Aorta (tissue), 5 donors: ENCODE measurements at regions of chr6 and their contacts with region 1.

Region 1: DNA sequence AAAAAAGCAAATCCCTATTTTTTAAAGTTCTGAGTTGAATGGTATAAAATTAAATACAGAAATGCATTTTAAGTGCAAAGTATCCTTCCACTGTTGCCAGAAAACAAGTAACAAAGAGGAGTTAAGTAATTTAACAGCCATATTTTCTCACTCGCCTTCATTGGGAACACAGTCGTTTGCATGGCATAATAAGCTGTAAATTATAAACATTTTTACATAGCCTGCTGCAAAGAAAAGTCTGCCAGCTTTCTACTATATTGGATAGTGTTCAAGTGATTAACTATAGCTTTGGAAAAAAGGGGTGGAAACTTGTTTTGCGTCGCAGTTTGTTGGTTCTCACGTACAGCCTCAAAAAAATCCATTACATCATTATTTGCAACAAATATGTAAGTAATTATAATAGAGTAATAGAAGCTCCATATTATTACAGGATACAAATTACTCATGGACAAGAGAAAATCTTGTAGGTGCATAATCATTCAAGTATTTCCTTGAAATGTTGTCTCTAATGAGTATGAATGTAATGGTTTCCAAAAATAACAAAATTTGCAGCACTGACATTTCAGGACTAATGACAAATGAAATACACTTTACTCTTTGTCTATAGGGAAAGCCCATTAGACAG is 139.3 kb downstream of the PDSS2 start:
- DNase-seq: no peak
- ATAC-seq: no peak
- H3K4me3 ChIP-seq: no peak overlapping the region
- H3K27ac ChIP-seq: no peak overlapping the region
- H3K4me1 ChIP-seq: no peaks in the 10 kb centered on the region
- H3K27me3 ChIP-seq: no peaks in the 10 kb centered on the region

Region 2: GRCh38 chr6:107704347-107705013 is 384.5 kb after region 1 on chr6:
- intact Hi-C with region 1: loop called in 1 of 2 experiments (anchors 10 kb)
- DNase-seq: no peak
- ATAC-seq: no peak
- H3K4me3 ChIP-seq: no peak overlapping the region
- H3K27ac ChIP-seq: no peak overlapping the region
- H3K4me1 ChIP-seq: no peaks in the 10 kb centered on the region
- H3K27me3 ChIP-seq: no peaks in the 10 kb centered on the region